Gastrocnemius medialis (tissue), 4 donors: ENCODE measurements at regions of chr10 and their contacts with region 1.

Region 1: DNA sequence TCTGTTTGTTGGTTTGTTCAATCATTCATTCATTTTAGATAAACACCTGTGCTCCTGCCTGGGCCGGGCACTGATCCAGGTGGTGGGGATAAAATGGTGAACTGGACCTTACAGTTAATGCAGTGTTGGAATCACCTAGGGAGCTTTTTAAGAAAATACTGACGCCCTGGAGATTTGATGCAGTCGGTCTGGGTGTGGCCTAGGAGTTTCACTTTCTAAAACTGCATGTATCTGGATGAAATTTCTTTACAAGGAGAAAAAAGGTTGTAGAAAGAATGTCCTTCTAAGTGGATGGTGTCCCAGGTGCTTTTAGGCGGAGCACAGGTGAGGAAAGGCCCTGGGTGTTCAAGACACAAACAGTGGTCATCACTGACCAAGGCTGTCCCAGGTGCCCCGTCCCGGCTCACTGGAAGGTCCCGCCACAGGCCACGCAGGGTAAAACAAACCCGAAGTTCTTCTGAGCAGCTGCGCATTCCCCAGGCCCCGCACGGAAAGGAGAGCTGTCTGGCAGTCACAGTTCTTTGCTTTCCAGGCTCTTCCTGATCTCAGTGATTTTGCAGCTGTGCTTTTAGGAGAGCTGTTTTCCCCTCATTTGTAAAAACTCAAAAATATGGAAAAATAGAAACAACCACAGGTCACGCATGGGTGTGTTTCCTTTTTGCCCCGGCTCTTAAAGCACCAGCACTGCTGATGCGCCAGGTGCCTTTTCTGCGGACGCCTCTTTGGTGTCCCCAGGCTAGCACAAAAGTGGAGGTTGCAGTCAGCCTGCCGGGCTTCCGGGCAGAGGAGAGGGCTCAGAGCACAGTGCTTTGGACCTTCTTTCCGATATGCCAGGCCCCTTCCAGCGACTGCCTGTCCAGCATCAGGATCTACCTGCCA is 161.9 kb downstream of the GRK5 start:
- DNase-seq: no peak
- ATAC-seq: no peak
- H3K4me3 ChIP-seq: peak overlapping the region in 2 of 4 donors; percentile 5 to 35
- H3K27ac ChIP-seq: peak overlapping the region; percentile 71 to 81 (median 76)
- H3K4me1 ChIP-seq: peaks cover 50 to 71% of the 10 kb centered on the region in 2 donors
- H3K27me3 ChIP-seq: no peaks in the 10 kb centered on the region
- CTCF ChIP-seq: no peak
- POLR2A ChIP-seq: no peak

Region 2: GRCh38 chr10:119401671-119402395 is 32.6 kb after region 1 on chr10:
- in situ Hi-C with region 1: no loop called
- intact Hi-C with region 1: loop called (anchors 5 kb)
- DNase-seq: peak; percentile 68 to 84
- ATAC-seq: peak; percentile 84 to 89
- H3K4me3 ChIP-seq: no peak overlapping the region
- H3K27ac ChIP-seq: peak overlapping the region; percentile 72 to 77 (median 74)
- H3K4me1 ChIP-seq: peaks cover 3 to 7% of the 10 kb centered on the region in 2 donors
- H3K27me3 ChIP-seq: no peaks in the 10 kb centered on the region
- CTCF ChIP-seq: no peak
- POLR2A ChIP-seq: peak in 1 of 2 donors; percentile 12

Region 3: DNA sequence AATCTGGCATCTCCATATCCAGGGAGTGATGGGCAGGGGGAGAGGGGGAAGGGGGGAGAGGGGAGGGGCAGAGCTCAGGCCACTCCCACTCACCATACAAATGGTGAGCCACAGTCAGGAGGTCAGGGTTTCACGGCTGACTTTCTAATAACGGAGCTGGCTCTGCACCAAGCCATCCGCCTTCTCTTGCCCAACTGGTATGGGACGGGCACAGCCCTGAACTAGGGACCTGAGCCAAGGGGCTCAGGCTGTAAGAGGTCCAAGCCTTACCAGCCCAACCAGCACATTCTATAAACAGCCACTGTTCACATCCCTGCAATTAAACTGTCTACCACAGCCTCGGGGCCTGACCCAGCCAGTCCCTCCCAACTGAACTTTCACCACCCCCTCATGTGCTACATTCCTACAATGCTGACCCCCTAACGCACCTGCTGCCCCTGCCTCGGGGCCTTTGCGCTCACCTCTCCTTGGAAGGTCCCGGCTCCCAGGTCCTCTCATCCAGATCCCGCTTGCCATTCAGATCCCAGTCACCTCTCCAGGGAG is 140.8 kb after region 1 on chr10:
- in situ Hi-C with region 1: no loop called
- intact Hi-C with region 1: no loop called
- DNase-seq: peak; percentile 23 to 59
- ATAC-seq: peak; percentile 85 to 86
- H3K4me3 ChIP-seq: no peak overlapping the region
- H3K27ac ChIP-seq: peak overlapping the region in 2 of 4 donors; percentile 6 to 60
- H3K4me1 ChIP-seq: peaks cover 4 to 7% of the 10 kb centered on the region in 2 donors
- H3K27me3 ChIP-seq: no peaks in the 10 kb centered on the region
- CTCF ChIP-seq: no peak
- POLR2A ChIP-seq: no peak

Region 4: DNA sequence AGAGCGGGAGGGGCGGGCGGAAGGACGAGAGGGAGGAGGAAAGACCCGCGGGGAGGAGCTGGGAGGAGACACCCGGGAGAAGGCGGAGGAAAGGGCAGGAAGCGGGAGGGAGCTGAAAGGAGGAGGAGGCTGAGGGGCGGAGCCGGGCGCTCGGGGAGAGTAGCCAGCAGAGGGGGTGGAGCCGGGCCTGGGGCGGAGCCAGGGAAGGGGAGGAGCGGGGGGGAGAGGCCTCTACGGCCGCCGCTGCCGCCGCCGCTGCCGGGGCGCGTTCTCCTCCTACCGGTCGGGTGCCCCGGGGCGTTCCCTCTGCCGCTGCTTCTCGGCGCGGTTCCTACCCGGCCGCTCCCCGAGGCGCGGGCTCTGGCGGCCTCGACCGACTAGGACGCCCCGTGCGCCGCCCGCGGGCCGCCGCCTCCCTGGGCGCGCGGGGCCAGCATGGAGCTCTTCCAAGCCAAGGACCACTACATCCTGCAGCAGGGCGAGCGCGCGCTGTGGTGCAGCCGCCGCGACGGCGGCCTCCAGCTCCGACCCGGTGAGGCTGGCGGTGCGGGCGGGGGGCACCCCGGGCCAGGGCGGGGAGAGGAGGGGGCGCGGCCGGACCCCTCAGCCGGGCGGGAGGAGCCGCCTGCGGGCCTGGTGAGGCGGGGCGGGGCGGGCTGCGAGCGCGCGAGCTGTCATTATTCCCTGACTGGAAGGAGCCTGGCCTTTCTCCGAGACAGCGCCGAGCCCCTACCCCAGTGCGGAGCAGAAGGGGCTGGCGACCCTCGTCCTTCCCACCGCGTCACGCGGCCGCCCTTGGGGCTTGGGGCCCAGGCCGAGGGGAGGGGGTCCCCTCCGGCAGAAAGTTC is 356.8 kb after region 1 on chr10 and contains the start of gene INPP5F:
- in situ Hi-C with region 1: no loop called
- intact Hi-C with region 1: no loop called
- DNase-seq: peak; percentile 99
- ATAC-seq: peak; percentile 94 to 96
- H3K4me3 ChIP-seq: peak within 1 kb of the TSS; percentile 74 to 93 (median 82)
- H3K27ac ChIP-seq: peak within 1 kb of the TSS; percentile 92 to 96 (median 94)
- H3K4me1 ChIP-seq: peaks cover 18 to 26% of the 10 kb centered on the region in 2 donors
- H3K27me3 ChIP-seq: no peaks in the 10 kb centered on the region
- CTCF ChIP-seq: peak; percentile 28 to 56 (median 41)
- POLR2A ChIP-seq: peak; percentile 75 to 77
- total RNA-seq, gene INPP5F: 8.7 to 11.6 (median 10.5) TPM